Dendritic cell treated with granulocyte-macrophage colony-stimulating factor and Interleukin-4, amounts not matched to agents 40 ng/mL and 50 ng/mL, for 4 days (primary cell): ENCODE measurements at regions of chr10 and their contacts with region 1.

Region 1: GRCh38 chr10:112721080-112721698 is 228.9 kb upstream of the TCF7L2 start:
- H3K4me3 Mint-ChIP-seq: no peak overlapping the region
- H3K27ac Mint-ChIP-seq: no peak overlapping the region
- H3K4me1 Mint-ChIP-seq: no peaks in the 10 kb centered on the region
- H3K27me3 Mint-ChIP-seq: no peaks in the 10 kb centered on the region

Region 2: DNA sequence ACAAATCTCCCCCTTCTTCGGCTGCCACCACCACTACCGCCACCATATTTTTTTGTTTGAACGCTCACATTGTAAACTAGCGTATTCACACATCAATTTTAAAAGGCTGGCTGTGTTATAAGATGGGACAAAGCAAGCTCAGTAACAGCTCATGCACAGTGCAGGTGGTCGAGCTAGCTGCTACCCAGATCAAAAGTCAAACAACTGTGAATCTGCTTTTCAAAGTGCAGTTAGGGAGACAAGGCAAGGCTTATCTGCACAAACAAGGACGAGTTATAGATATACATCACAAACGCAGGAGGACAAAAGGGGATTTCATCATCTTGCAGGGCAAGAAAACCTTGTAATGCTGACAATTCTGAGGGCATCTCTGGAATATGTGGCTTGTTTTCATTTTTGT is 42.6 kb before region 1 on chr10:
- intact Hi-C with region 1: no loop called
- H3K4me3 Mint-ChIP-seq: no peak overlapping the region
- H3K27ac Mint-ChIP-seq: no peak overlapping the region
- H3K4me1 Mint-ChIP-seq: no peaks in the 10 kb centered on the region
- H3K27me3 Mint-ChIP-seq: no peaks in the 10 kb centered on the region

Region 3: GRCh38 chr10:113052076-113052830 is 331.1 kb after region 1 on chr10:
- intact Hi-C with region 1: loop called (anchors 10 kb)
- H3K4me3 Mint-ChIP-seq: no peak overlapping the region
- H3K27ac Mint-ChIP-seq: no peak overlapping the region
- H3K4me1 Mint-ChIP-seq: no peaks in the 10 kb centered on the region
- H3K27me3 Mint-ChIP-seq: peaks cover 35% of the 10 kb centered on the region